ENCODE measurements at regions of chr1 and their contacts with region 1.

Region 1: DNA sequence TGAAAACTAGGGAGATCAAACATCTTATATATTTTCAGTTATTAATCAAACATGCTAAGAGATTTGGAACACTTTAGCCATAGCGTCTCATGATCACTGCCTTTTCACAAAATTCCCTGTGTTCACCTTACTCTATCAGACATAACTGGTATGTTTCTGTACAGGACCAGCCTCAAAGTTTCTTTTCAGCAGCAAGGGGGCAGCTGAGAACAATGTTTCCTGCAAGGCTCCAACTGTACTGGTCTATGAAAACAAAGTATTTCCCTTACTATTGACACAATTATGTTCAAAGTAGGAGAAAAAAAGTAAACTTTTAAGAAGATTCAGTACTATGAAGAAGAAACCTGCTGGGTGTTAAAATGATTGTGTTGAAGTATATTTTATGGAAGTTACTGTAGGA is 98.5 kb downstream of the ATF6 start:
- DNase-seq: no peak
- ATAC-seq: peak in 1 of 4 donors; percentile 34
- H3K4me3 ChIP-seq: no peak overlapping the region
- H3K27ac ChIP-seq: no peak overlapping the region
- H3K4me1 ChIP-seq: peaks cover 0 to 2% (median 0%) of the 10 kb centered on the region in 12 donors
- H3K27me3 ChIP-seq: no peaks in the 10 kb centered on the region
- CTCF ChIP-seq: peak in 9 of 12 donors; percentile 12 to 58 (median 42)
- POLR2A ChIP-seq: no peak

Region 2: DNA sequence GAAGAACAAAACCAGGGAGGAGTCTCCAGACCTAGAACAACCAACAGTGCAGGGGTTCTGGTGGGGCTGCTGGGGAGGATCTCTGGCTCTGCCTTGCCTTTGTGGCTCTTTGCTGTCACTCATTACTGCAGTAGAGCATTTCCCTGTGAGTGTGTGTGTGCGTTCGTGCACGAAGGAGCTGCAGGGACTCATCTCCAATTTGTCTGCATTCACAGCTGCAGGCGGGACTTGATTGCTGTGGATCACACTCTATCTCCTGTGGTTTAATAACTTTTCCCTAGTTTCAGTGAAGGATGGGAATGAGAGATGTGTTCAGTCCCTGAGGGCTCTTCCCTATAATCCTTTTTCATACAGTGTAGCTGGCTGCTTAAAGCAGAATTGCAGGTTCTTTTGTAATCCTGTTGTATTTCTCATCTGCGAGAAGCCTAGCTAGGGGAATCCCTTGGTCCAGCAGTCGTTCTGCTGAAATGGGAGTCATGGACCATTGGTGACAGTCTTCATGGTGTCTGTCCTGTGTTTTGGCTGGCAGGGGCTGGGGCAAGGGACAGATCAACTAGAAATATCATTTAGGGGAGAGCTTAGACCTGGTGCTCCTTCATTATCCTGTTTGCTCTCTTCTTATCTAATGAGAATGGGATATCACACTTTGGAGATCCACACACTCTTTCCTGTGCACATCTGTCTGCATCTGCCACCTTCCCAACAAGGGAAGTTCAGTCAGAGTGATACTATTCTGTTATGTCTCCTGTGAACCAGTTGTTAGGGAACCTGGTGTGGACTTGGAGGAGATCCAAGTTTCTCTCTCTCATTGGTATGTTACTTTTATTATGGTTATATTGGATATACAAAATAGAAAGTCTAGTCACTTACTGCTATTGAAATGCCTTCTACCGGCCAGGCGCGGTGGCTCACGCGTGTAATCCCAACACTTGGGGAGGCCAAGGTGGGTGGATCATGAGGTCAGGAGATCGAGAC is 603.0 kb before region 1 on chr1:
- intact Hi-C with region 1: no loop called
- DNase-seq: no peak
- ATAC-seq: no peak
- H3K4me3 ChIP-seq: no peak overlapping the region
- H3K27ac ChIP-seq: no peak overlapping the region
- H3K4me1 ChIP-seq: peaks cover 0 to 13% (median 8%) of the 10 kb centered on the region in 12 donors
- H3K27me3 ChIP-seq: peaks cover 13 to 44% (median 33%) of the 10 kb centered on the region in 9 donors
- CTCF ChIP-seq: no peak
- POLR2A ChIP-seq: no peak

Region 3: GRCh38 chr1:161359291-161359690 is 505.3 kb before region 1 on chr1:
- intact Hi-C with region 1: no loop called
- DNase-seq: no peak
- ATAC-seq: peak in 3 of 4 donors; percentile 49 to 82 (median 58)
- H3K4me3 ChIP-seq: no peak overlapping the region
- H3K27ac ChIP-seq: peak overlapping the region in 4 of 12 donors; percentile 8 to 90 (median 33)
- H3K4me1 ChIP-seq: peaks cover 0 to 18% (median 6%) of the 10 kb centered on the region in 12 donors
- H3K27me3 ChIP-seq: no peaks in the 10 kb centered on the region
- CTCF ChIP-seq: no peak
- POLR2A ChIP-seq: no peak

Region 4: GRCh38 chr1:162035241-162035640 is 170.7 kb after region 1 on chr1:
- intact Hi-C with region 1: loop called in 9 of 10 experiments (anchors 2 to 10 kb)
- DNase-seq: no peak
- ATAC-seq: no peak
- H3K4me3 ChIP-seq: no peak overlapping the region
- H3K27ac ChIP-seq: no peak overlapping the region
- H3K4me1 ChIP-seq: peaks cover 0 to 7% (median 0%) of the 10 kb centered on the region in 12 donors
- H3K27me3 ChIP-seq: peaks cover 0 to 5% (median 0%) of the 10 kb centered on the region in 9 donors
- CTCF ChIP-seq: no peak
- POLR2A ChIP-seq: no peak

Measured in heart left ventricle (tissue), 16 donors.